AG04450 (cell line): ENCODE measurements at regions of chr9 and their contacts with region 1.

Region 1: DNA sequence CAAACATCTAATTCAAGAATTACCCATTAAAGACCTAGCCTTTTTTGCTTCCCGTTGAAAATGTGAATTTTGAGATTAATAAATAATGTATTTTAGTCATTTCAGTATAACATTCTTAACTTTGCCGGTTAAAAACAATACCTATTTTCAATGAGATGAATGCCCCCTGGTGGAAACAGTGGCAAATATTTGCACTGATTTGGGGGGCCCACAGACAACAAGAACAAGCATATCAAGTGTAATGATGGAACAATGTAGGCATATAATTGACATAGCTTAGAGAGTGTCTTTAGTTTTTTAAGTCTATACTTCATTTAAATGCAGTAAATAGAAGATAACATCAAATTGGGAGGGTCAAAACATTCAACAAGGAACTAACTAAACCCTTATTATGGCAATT is 111.9 kb downstream of the NTRK2 start:
- DNase-seq: no peak
- H3K4me3 ChIP-seq: no peak overlapping the region
- H3K27ac ChIP-seq: no peak overlapping the region
- H3K27me3 ChIP-seq: no peaks in the 10 kb centered on the region
- CTCF ChIP-seq: peak; percentile 20; the same call in 1 of the 2 replicates

Region 2: GRCh38 chr9:84397151-84397728 is 384.2 kb before region 1 on chr9:
- CTCF ChIA-PET with region 1: interaction called, 16 read pairs
- POLR2A ChIA-PET with region 1: no interaction called
- DNase-seq: peak; percentile 38
- H3K4me3 ChIP-seq: no peak overlapping the region
- H3K27ac ChIP-seq: no peak overlapping the region
- H3K27me3 ChIP-seq: no peaks in the 10 kb centered on the region
- CTCF ChIP-seq: peak; percentile 90

Region 3: GRCh38 chr9:84736081-84736480 is 45.4 kb before region 1 on chr9:
- CTCF ChIA-PET with region 1: no interaction called
- POLR2A ChIA-PET with region 1: no interaction called
- DNase-seq: no peak
- H3K4me3 ChIP-seq: no peak overlapping the region
- H3K27ac ChIP-seq: no peak overlapping the region
- H3K27me3 ChIP-seq: no peaks in the 10 kb centered on the region
- CTCF ChIP-seq: no peak

Region 4: GRCh38 chr9:84794981-84795637 is 13.7 kb after region 1 on chr9:
- CTCF ChIA-PET with region 1: no interaction called
- POLR2A ChIA-PET with region 1: no interaction called
- DNase-seq: no peak
- H3K4me3 ChIP-seq: no peak overlapping the region
- H3K27ac ChIP-seq: no peak overlapping the region
- H3K27me3 ChIP-seq: no peaks in the 10 kb centered on the region
- CTCF ChIP-seq: no peak

Region 5: DNA sequence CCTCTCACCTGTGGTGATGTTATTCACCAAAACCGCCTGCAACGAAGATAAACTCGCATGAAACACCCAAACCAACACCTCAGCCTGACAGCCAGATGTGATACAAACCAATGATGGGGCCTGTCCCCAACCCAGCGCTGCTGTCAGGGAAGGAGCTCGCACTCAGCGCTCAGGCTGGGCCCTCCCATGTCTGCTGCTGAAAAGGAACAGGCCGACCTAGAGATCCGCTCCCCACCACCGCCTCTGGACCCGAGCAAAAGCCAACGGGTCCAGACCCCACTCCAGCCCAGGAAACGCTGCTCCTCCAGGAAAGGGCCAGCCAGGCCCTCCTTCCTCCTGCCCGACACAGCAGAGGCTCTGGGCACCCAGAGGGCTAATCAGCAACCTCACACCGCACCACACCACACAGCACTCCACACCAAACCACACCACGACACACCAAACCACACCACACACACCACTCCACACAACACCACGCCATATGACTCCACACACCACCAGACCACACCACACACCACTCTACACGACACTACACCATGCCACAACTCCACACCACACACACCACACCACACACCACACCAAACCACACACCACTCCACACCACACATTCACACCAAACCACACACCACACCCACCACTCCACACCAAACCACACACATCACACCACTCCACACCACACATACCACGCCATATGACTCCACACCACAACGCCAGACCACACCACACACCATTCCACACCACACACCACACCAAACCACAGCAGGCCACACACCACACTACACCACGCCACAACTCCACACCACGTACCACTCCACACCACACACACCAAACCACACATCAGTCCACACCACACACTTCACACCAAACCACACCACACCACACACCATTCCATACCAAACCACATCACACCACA is 1271.4 kb after region 1 on chr9:
- CTCF ChIA-PET with region 1: no interaction called
- POLR2A ChIA-PET with region 1: no interaction called
- DNase-seq: no peak
- H3K4me3 ChIP-seq: no peak overlapping the region
- H3K27ac ChIP-seq: no peak overlapping the region
- H3K27me3 ChIP-seq: no peaks in the 10 kb centered on the region
- CTCF ChIP-seq: no peak